ENCODE measurements at regions of chr16 and their contacts with region 1.

Region 1: GRCh38 chr16:47141773-47142485 is 1.8 kb downstream of the NETO2 start:
- DNase-seq: peak; percentile 80 to 89 (median 83)
- H3K4me3 ChIP-seq: peak overlapping the region; percentile 46 to 52
- H3K4me3 Mint-ChIP-seq: peak overlapping the region; percentile 87 to 93 (median 90)
- H3K27ac ChIP-seq: no peak overlapping the region
- H3K27ac Mint-ChIP-seq: peak overlapping the region; percentile 12 to 93 (median 71)
- H3K4me1 ChIP-seq: peaks cover 27% of the 10 kb centered on the region
- H3K4me1 Mint-ChIP-seq: peaks cover 8 to 21% (median 13%) of the 10 kb centered on the region in 4 donors
- H3K27me3 ChIP-seq: no peaks in the 10 kb centered on the region
- H3K27me3 Mint-ChIP-seq: peaks cover 0 to 3% of the 10 kb centered on the region in 2 donors

Region 2: DNA sequence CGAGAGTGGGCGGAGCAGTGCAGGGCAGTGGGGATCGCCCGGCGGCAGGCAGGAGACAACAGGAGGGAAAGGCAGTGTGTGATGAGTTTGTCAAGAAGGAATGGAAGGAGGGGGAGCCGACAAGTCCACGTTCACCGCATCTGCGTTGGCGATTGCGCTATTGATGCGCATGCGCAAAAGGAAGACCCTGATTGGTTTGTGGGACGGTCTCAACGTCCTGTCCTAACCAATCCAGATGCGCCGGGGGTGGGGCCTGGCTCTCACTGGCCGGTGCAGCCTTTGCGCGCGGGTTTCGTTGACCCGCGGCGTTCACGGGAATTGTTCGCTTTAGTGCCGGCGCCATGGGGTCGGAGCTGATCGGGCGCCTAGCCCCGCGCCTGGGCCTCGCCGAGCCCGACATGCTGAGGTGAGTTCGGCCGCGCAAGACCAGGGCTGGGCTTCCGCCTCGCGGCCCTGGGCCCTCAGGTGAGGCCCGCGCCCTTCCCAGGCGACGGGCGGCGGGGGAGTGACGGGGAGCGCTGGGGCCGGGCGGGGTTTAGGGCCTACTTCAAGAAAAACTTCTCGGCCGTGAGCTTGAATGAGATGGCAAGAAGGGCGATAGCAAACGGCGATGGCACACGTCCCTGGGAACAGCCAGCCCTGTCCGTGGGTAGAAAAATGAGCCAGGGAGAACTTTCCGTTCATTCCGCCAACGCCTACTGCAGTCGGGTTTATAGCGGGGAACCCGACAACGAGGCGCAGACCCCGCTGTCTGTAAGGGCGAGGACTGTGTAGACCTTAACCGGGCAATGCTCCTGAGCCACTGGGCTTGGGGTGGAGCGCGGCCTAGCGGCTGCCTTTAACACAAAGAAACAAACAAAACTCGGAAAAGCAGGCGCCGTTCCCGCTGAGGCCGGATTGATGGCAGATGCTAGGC is 452.3 kb before region 1 on chr16 and contains the start of gene ORC6:
- CTCF ChIA-PET with region 1: interaction called, 6 read pairs
- POLR2A ChIA-PET with region 1: no interaction called
- intact Hi-C with region 1: loop called (anchors 5 kb)
- DNase-seq: peak; percentile 97 to 98 (median 97)
- H3K4me3 ChIP-seq: peak within 1 kb of the TSS; percentile 92 to 97
- H3K4me3 Mint-ChIP-seq: no peak within 1 kb of the TSS
- H3K27ac ChIP-seq: peak within 1 kb of the TSS; percentile 92
- H3K27ac Mint-ChIP-seq: no peak within 1 kb of the TSS
- H3K4me1 ChIP-seq: peaks cover 46% of the 10 kb centered on the region
- H3K4me1 Mint-ChIP-seq: peaks cover 26 to 33% (median 30%) of the 10 kb centered on the region in 4 donors
- H3K27me3 ChIP-seq: no peaks in the 10 kb centered on the region
- H3K27me3 Mint-ChIP-seq: no peaks in the 10 kb centered on the region
- total RNA-seq, gene ORC6: 3.0 to 3.3 TPM

Region 3: GRCh38 chr16:46973207-46973995 is 168.5 kb before region 1 on chr16 and contains the start of gene DNAJA2:
- CTCF ChIA-PET with region 1: interaction called, 10 read pairs
- POLR2A ChIA-PET with region 1: interaction called, 23 read pairs
- intact Hi-C with region 1: loop called (anchors 1 kb)
- DNase-seq: peak; percentile 87 to 92 (median 91)
- H3K4me3 ChIP-seq: peak within 1 kb of the TSS; percentile 85 to 95
- H3K4me3 Mint-ChIP-seq: peak within 1 kb of the TSS; percentile 92 to 98 (median 95)
- H3K27ac ChIP-seq: peak within 1 kb of the TSS; percentile 91
- H3K27ac Mint-ChIP-seq: peak within 1 kb of the TSS; percentile 95 to 100 (median 99)
- H3K4me1 ChIP-seq: peaks cover 64% of the 10 kb centered on the region
- H3K4me1 Mint-ChIP-seq: peaks cover 35 to 74% (median 54%) of the 10 kb centered on the region in 4 donors
- H3K27me3 ChIP-seq: no peaks in the 10 kb centered on the region
- H3K27me3 Mint-ChIP-seq: no peaks in the 10 kb centered on the region
- total RNA-seq, gene DNAJA2: 73.2 to 79.5 TPM

Region 4: GRCh38 chr16:47156680-47157215 is 14.8 kb after region 1 on chr16:
- CTCF ChIA-PET with region 1: interaction called, 39 read pairs
- POLR2A ChIA-PET with region 1: no interaction called
- intact Hi-C with region 1: no loop called
- DNase-seq: no peak
- H3K4me3 ChIP-seq: no peak overlapping the region
- H3K4me3 Mint-ChIP-seq: no peak overlapping the region
- H3K27ac ChIP-seq: no peak overlapping the region
- H3K27ac Mint-ChIP-seq: peak overlapping the region in 1 of 7 donors; percentile 6
- H3K4me1 ChIP-seq: no peaks in the 10 kb centered on the region
- H3K4me1 Mint-ChIP-seq: no peaks in the 10 kb centered on the region
- H3K27me3 ChIP-seq: no peaks in the 10 kb centered on the region
- H3K27me3 Mint-ChIP-seq: no peaks in the 10 kb centered on the region

Region 5: GRCh38 chr16:47320546-47321310 is 178.8 kb after region 1 on chr16:
- CTCF ChIA-PET with region 1: no interaction called
- POLR2A ChIA-PET with region 1: no interaction called
- intact Hi-C with region 1: no loop called
- DNase-seq: no peak
- H3K4me3 ChIP-seq: no peak overlapping the region
- H3K4me3 Mint-ChIP-seq: no peak overlapping the region
- H3K27ac ChIP-seq: no peak overlapping the region
- H3K27ac Mint-ChIP-seq: peak overlapping the region in 1 of 7 donors; percentile 35
- H3K4me1 ChIP-seq: no peaks in the 10 kb centered on the region
- H3K4me1 Mint-ChIP-seq: peaks cover 0 to 3% (median 0%) of the 10 kb centered on the region in 4 donors
- H3K27me3 ChIP-seq: no peaks in the 10 kb centered on the region
- H3K27me3 Mint-ChIP-seq: no peaks in the 10 kb centered on the region

Region 6: DNA sequence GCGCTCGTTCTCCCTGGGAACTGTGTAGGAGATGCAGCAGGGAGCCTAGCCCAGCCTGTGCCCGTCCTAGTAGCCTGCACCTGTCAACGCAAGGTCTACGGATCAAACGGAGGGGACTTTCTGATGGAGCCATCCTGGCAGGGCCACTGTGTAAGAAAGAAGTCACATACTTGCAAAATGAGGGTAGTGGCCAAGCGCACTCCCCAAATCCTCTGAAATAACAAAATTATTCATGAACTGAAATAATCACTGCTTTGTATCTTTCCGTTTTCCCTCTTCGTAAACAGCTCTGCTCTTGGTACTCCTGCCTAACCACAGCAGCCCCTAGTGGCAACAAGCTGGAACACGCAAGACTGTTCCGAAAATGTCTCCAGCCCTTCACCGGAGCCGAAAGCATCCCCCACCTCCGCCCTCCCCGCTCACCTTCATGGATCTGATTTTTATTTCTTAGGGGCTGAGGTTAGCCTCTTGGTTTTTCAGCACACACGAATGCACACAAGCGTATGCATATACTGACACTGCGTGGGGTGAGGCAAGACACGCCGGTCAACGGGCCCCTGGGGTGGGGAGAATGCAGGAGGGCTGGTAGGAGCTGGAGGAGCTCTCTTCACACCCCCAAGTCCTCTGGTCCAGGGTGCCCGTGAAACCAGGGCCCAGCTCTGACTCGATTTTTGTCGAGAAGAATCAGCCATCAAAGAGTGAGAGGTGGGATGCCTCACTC is 913.1 kb after region 1 on chr16:
- CTCF ChIA-PET with region 1: interaction called, 8 read pairs
- POLR2A ChIA-PET with region 1: no interaction called
- intact Hi-C with region 1: loop called (anchors 2 kb)
- DNase-seq: peak in 4 of 5 donors; percentile 3 to 22 (median 8)
- H3K4me3 ChIP-seq: no peak overlapping the region
- H3K4me3 Mint-ChIP-seq: peak overlapping the region in 2 of 8 donors; percentile 14 to 20
- H3K27ac ChIP-seq: no peak overlapping the region
- H3K27ac Mint-ChIP-seq: no peak overlapping the region
- H3K4me1 ChIP-seq: no peaks in the 10 kb centered on the region
- H3K4me1 Mint-ChIP-seq: peaks cover 0 to 6% (median 1%) of the 10 kb centered on the region in 4 donors
- H3K27me3 ChIP-seq: peaks cover 5% of the 10 kb centered on the region
- H3K27me3 Mint-ChIP-seq: peaks cover 8 to 16% of the 10 kb centered on the region in 2 donors

Region 7: DNA sequence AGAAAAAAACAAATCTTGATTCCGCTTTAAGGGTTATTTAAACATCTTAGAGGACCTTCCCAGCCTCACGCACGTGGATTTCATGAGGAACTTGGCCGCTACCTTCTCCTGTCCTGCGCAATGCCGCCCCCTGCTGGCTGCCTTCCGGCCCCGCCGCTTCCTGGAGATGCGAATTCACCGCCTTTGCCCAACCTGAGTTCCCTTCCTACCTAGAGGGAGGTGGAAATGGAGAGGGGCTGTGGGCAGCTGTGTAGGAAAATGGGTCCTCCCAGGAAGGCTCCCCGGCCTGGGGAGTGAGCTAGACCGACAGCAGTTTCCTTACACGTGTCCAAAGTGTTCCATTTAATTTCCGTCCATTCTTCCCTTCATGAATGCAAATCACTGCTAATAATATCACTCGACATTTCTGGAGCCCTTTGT is 1014.9 kb after region 1 on chr16:
- CTCF ChIA-PET with region 1: interaction called, 24 read pairs
- POLR2A ChIA-PET with region 1: no interaction called
- intact Hi-C with region 1: loop called (anchors 1 kb)
- DNase-seq: peak; percentile 69 to 77 (median 72)
- H3K4me3 ChIP-seq: no peak overlapping the region
- H3K4me3 Mint-ChIP-seq: peak overlapping the region in 1 of 8 donors; percentile 44
- H3K27ac ChIP-seq: no peak overlapping the region
- H3K27ac Mint-ChIP-seq: no peak overlapping the region
- H3K4me1 ChIP-seq: peaks cover 4% of the 10 kb centered on the region
- H3K4me1 Mint-ChIP-seq: peaks cover 0 to 4% (median 0%) of the 10 kb centered on the region in 4 donors
- H3K27me3 ChIP-seq: no peaks in the 10 kb centered on the region
- H3K27me3 Mint-ChIP-seq: peaks cover 2 to 5% of the 10 kb centered on the region in 2 donors

Region 8: DNA sequence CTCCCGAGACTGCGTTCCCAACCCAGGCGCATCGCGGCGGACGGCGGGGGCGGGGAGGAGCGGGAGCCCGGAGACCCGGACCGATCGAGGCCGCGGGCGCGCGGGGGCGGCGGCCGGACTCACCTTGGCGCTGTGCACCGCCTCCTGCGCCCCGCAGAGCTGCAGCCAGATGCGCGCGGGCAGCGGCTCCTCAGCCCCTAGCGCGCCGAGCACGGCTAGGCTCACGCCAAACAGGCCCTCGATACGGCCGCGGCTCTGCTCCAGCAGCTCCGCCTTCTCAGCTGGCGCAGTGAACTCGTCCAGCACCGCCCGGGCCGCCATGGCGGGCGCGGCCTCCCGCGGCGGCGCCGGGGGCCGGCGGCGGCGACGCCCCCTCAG is 1467.7 kb after region 1 on chr16:
- CTCF ChIA-PET with region 1: no interaction called
- POLR2A ChIA-PET with region 1: no interaction called
- intact Hi-C with region 1: loop called (anchors 2 kb)
- DNase-seq: no peak
- H3K4me3 ChIP-seq: peak overlapping the region; percentile 55 to 82
- H3K4me3 Mint-ChIP-seq: peak overlapping the region in 1 of 8 donors; percentile 90
- H3K27ac ChIP-seq: peak overlapping the region; percentile 87
- H3K27ac Mint-ChIP-seq: peak overlapping the region; percentile 92 to 97 (median 95)
- H3K4me1 ChIP-seq: peaks cover 81% of the 10 kb centered on the region
- H3K4me1 Mint-ChIP-seq: peaks cover 35 to 52% (median 39%) of the 10 kb centered on the region in 4 donors
- H3K27me3 ChIP-seq: no peaks in the 10 kb centered on the region
- H3K27me3 Mint-ChIP-seq: no peaks in the 10 kb centered on the region

Measured in CD4-positive, alpha-beta memory T cell (primary cell).